ENCODE measurements at regions of chr20 and their contacts with region 1.

Region 1: GRCh38 chr20:3218307-3218988 is 9.2 kb downstream of the ITPA start:
- DNase-seq: peak; percentile 47 to 73 (median 71)
- H3K4me3 ChIP-seq: no peak overlapping the region
- H3K27ac ChIP-seq: no peak overlapping the region
- H3K4me1 ChIP-seq: peaks cover 0 to 25% (median 20%) of the 10 kb centered on the region in 4 experiments
- H3K27me3 ChIP-seq: no peaks in the 10 kb centered on the region

Region 2: GRCh38 chr20:3248167-3248992 is 29.9 kb after region 1 on chr20:
- CTCF ChIA-PET with region 1: interaction called, 18 read pairs
- POLR2A ChIA-PET with region 1: no interaction called
- DNase-seq: peak; percentile 50 to 65 (median 63)
- H3K4me3 ChIP-seq: peak overlapping the region in 5 of 7 experiments; percentile 32 to 62 (median 48)
- H3K27ac ChIP-seq: no peak overlapping the region
- H3K4me1 ChIP-seq: peaks cover 0 to 11% (median 9%) of the 10 kb centered on the region in 4 experiments
- H3K27me3 ChIP-seq: peaks cover 11 to 54% (median 15%) of the 10 kb centered on the region in 5 experiments